ENCODE measurements at regions of chr13 and their contacts with region 1.

Region 1: GRCh38 chr13:26186118-26186870 is 35.8 kb downstream of the RNF6 start:
- DNase-seq: peak; percentile 85 to 93 (median 91)
- H3K4me3 ChIP-seq: peak overlapping the region; percentile 86
- H3K4me3 Mint-ChIP-seq: peak overlapping the region; percentile 91 to 99 (median 94)
- H3K27ac ChIP-seq: peak overlapping the region; percentile 74
- H3K27ac Mint-ChIP-seq: peak overlapping the region; percentile 92 to 98 (median 94)
- H3K4me1 ChIP-seq: peaks cover 15% of the 10 kb centered on the region
- H3K4me1 Mint-ChIP-seq: peaks cover 19 to 40% (median 21%) of the 10 kb centered on the region in 3 donors
- H3K27me3 ChIP-seq: no peaks in the 10 kb centered on the region
- H3K27me3 Mint-ChIP-seq: no peaks in the 10 kb centered on the region

Region 2: DNA sequence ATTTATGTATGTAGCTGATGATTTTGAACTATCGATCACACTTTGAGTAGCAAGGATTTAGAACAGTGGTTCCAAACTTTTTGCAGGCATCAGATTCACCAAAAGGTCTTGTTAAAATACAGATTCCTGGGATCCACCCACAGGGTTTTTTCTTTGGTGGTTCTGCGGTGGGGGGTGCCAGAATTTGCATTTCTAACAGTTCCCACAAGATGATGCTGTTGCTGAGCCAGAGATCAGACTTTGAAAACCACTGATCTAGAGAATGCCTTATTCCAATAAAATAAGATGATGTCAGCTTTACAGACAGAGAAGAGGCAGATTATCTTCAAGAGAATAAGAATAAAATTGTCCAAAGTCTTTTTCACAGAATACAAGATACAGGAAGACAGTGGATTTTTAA is 53.5 kb before region 1 on chr13:
- CTCF ChIA-PET with region 1: no interaction called
- POLR2A ChIA-PET with region 1: no interaction called
- DNase-seq: no peak
- H3K4me3 ChIP-seq: no peak overlapping the region
- H3K4me3 Mint-ChIP-seq: no peak overlapping the region
- H3K27ac ChIP-seq: no peak overlapping the region
- H3K27ac Mint-ChIP-seq: no peak overlapping the region
- H3K4me1 ChIP-seq: no peaks in the 10 kb centered on the region
- H3K4me1 Mint-ChIP-seq: no peaks in the 10 kb centered on the region
- H3K27me3 ChIP-seq: no peaks in the 10 kb centered on the region
- H3K27me3 Mint-ChIP-seq: peaks cover 3 to 14% of the 10 kb centered on the region in 2 donors

Region 3: DNA sequence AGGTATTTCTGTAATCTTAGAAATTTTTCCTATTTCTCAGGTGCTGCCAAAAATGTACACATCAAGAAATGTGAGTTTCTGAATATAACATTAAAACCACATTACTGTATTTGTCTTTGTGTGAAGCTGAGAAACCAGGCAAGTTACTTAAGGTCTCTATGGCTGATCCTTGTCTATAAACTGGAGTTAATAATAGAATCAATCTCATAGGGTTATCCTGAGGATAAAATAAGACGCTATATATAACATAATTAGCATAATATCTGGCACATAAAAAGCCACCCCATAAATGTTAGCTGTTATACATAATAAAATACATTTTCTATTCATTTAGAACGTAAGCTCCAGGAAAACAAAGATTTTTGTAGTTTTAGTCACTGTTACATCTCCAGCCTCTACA is 29.7 kb after region 1 on chr13:
- CTCF ChIA-PET with region 1: interaction called, 23 read pairs
- POLR2A ChIA-PET with region 1: interaction called, 4 read pairs
- DNase-seq: no peak
- H3K4me3 ChIP-seq: no peak overlapping the region
- H3K4me3 Mint-ChIP-seq: no peak overlapping the region
- H3K27ac ChIP-seq: no peak overlapping the region
- H3K27ac Mint-ChIP-seq: no peak overlapping the region
- H3K4me1 ChIP-seq: peaks cover 21% of the 10 kb centered on the region
- H3K4me1 Mint-ChIP-seq: peaks cover 32 to 58% (median 47%) of the 10 kb centered on the region in 3 donors
- H3K27me3 ChIP-seq: no peaks in the 10 kb centered on the region
- H3K27me3 Mint-ChIP-seq: no peaks in the 10 kb centered on the region

Region 4: DNA sequence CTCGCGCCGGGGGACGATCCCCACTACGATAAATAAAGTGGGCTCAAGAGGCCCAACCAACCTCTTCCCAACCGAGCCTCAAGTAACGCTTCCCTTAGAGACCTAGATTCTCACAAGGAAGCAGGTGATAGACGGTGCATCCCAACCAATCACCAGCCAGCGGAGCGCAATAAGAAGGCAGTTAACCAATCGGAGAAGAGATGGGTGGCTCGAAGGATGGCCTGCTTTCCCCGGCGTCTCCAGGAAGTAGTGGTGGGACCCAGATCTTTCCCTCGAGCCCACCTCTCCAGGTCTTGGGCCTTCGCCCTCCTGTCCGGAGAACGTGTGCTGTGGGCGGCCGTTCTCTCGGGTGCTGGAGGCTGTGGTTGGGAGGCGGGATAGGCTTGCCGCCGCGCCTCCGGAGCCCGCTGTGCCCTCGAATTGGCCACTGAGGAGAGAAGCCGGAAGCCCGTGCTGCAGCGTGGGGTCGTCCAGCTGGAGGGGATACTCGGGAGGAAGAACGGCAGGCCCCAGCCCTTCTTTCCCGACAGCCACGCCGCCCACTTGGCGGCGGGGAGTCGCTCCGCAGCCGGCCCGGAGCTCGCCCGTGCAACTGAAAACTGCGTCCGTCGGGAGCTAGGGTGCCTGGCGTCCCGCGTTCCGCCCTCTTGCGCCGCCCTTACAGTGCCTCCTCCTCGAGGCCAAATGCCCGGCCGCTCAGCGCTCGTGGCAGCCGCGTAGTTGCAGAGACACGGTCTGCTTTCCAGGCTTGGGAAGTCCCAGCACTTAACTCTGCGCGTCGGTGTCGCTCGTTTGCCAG is 35.6 kb after region 1 on chr13 and contains the start of gene RNF6:
- CTCF ChIA-PET with region 1: interaction called, 23 read pairs
- POLR2A ChIA-PET with region 1: interaction called, 8 read pairs
- DNase-seq: peak; percentile 79 to 93 (median 89)
- H3K4me3 ChIP-seq: peak within 1 kb of the TSS; percentile 93
- H3K4me3 Mint-ChIP-seq: peak within 1 kb of the TSS; percentile 93 to 99 (median 95)
- H3K27ac ChIP-seq: peak within 1 kb of the TSS; percentile 95
- H3K27ac Mint-ChIP-seq: peak within 1 kb of the TSS; percentile 83 to 100 (median 99)
- H3K4me1 ChIP-seq: peaks cover 30% of the 10 kb centered on the region
- H3K4me1 Mint-ChIP-seq: peaks cover 40 to 52% (median 51%) of the 10 kb centered on the region in 3 donors
- H3K27me3 ChIP-seq: no peaks in the 10 kb centered on the region
- H3K27me3 Mint-ChIP-seq: peaks cover 0 to 14% of the 10 kb centered on the region in 2 donors
- total RNA-seq, gene RNF6: 64.6 to 65.0 TPM

Region 5: DNA sequence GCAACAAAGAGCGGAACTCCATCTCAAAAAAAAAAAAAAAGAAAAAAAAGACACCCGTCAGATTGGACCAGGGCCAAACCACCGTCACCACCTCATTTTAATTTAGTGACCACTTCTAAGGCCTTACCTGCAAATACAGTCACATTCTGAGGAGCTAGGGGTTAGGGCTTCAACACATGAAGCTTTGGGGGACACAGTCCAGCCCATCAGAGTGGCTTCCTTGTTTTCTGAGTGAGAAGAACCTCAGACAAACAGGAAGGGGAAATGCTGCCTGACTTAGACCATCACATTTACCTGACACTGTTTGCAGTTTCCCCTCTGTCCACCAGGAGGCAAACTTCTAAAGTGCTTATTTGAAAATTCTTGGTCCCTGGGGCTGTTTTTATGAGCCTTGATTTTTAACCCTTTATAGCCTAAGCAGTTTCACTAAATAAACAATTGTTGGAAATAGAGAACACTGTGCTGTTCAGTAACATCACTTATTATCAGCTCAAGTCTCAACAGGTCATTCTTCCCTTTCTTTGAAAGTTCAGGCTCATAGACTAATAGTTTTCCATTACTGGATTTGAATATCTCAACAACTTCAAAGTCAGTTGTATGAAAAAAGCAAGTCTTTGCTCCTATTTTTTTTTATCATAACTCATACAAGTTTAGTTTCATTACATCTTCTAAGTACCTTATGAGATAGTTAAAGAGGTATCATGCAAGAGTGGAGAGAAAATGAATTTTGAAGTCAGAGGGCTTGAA is 296.3 kb after region 1 on chr13:
- CTCF ChIA-PET with region 1: interaction called, 10 read pairs
- POLR2A ChIA-PET with region 1: no interaction called
- DNase-seq: peak; percentile 34 to 85 (median 73)
- H3K4me3 ChIP-seq: no peak overlapping the region
- H3K4me3 Mint-ChIP-seq: peak overlapping the region; percentile 3 to 53 (median 33)
- H3K27ac ChIP-seq: no peak overlapping the region
- H3K27ac Mint-ChIP-seq: peak overlapping the region; percentile 50 to 90 (median 68)
- H3K4me1 ChIP-seq: peaks cover 21% of the 10 kb centered on the region
- H3K4me1 Mint-ChIP-seq: peaks cover 6 to 20% (median 15%) of the 10 kb centered on the region in 3 donors
- H3K27me3 ChIP-seq: no peaks in the 10 kb centered on the region
- H3K27me3 Mint-ChIP-seq: peaks cover 0 to 2% of the 10 kb centered on the region in 2 donors

Region 6: GRCh38 chr13:26502826-26503225 is 316.5 kb after region 1 on chr13:
- CTCF ChIA-PET with region 1: interaction called, 141 read pairs
- POLR2A ChIA-PET with region 1: no interaction called
- DNase-seq: no peak
- H3K4me3 ChIP-seq: no peak overlapping the region
- H3K4me3 Mint-ChIP-seq: no peak overlapping the region
- H3K27ac ChIP-seq: no peak overlapping the region
- H3K27ac Mint-ChIP-seq: peak overlapping the region in 1 of 8 donors; percentile 76
- H3K4me1 ChIP-seq: no peaks in the 10 kb centered on the region
- H3K4me1 Mint-ChIP-seq: peaks cover 3 to 4% (median 4%) of the 10 kb centered on the region in 3 donors
- H3K27me3 ChIP-seq: no peaks in the 10 kb centered on the region
- H3K27me3 Mint-ChIP-seq: peaks cover 17 to 19% of the 10 kb centered on the region in 2 donors

Region 7: GRCh38 chr13:26698392-26699196 is 512.3 kb after region 1 on chr13:
- CTCF ChIA-PET with region 1: interaction called, 94 read pairs
- POLR2A ChIA-PET with region 1: interaction called, 3 read pairs
- DNase-seq: peak; percentile 66 to 81 (median 68)
- H3K4me3 ChIP-seq: no peak overlapping the region
- H3K4me3 Mint-ChIP-seq: peak overlapping the region in 1 of 7 donors; percentile 27
- H3K27ac ChIP-seq: no peak overlapping the region
- H3K27ac Mint-ChIP-seq: no peak overlapping the region
- H3K4me1 ChIP-seq: no peaks in the 10 kb centered on the region
- H3K4me1 Mint-ChIP-seq: peaks cover 6 to 9% (median 6%) of the 10 kb centered on the region in 3 donors
- H3K27me3 ChIP-seq: no peaks in the 10 kb centered on the region
- H3K27me3 Mint-ChIP-seq: peaks cover 7 to 20% of the 10 kb centered on the region in 2 donors